A549 (cell line): ENCODE measurements at regions of chr22 and their contacts with region 1.

Region 1: GRCh38 chr22:23893943-23894709 is at the start of gene MIF:
- DNase-seq: peak; percentile 73 to 93
- ATAC-seq: peak; percentile 84 to 88
- H3K4me3 ChIP-seq: peak within 1 kb of the TSS; percentile 81
- H3K27ac ChIP-seq: peak within 1 kb of the TSS; percentile 98 to 99
- H3K4me1 ChIP-seq: peaks cover 29% of the 10 kb centered on the region
- CTCF ChIP-seq: peak; percentile 60
- EP300 ChIP-seq: no peak
- POLR2A ChIP-seq: peak; percentile 91
- RAD21 ChIP-seq: 0 out of 5 replicates have a peak, but pooled peaks of 1 of the 2 experiments have one; percentile 14
- polyA plus RNA-seq, gene MIF: 173 and 197 TPM in 2 replicates

Region 2: GRCh38 chr22:23857606-23858483 is 36.3 kb before region 1 on chr22 and contains the start of gene SLC2A11:
- CTCF ChIA-PET with region 1: interaction called, 12 read pairs
- POLR2A ChIA-PET with region 1: interaction called, 25 read pairs
- DNase-seq: peak; percentile 85 to 95
- ATAC-seq: peak; percentile 96 to 97
- H3K4me3 ChIP-seq: peak within 1 kb of the TSS; percentile 58
- H3K27ac ChIP-seq: peak within 1 kb of the TSS; percentile 81 to 90
- H3K4me1 ChIP-seq: peaks cover 9% of the 10 kb centered on the region; the same call in 1 of the 3 replicates
- CTCF ChIP-seq: no peak
- EP300 ChIP-seq: no peak
- POLR2A ChIP-seq: peak; percentile 92
- RAD21 ChIP-seq: no peak
- polyA plus RNA-seq, gene SLC2A11: 5.6 and 6.9 TPM in 2 replicates

Region 3: DNA sequence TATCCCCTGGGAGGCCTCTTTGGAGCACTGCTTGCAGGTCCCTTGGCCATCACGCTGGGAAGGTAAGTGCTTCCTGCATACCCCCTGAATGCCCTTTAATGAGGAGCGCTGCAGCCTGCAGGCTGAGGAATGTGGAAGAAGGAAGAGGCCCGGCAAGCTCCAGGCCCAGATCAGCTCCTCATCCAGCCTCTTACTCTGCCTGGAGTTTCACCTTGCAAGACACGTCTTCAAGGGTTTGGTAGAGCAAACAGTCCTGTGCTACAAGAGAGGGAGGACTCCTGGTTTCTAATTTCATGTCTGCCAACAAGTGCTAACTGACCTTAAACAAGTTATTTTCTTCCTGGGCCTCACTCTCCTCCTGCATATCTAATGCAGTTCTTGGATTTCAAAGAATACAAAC is 25.5 kb before region 1 on chr22:
- CTCF ChIA-PET with region 1: interaction called, 12 read pairs
- POLR2A ChIA-PET with region 1: interaction called, 6 read pairs
- DNase-seq: no peak
- ATAC-seq: no peak
- H3K4me3 ChIP-seq: no peak overlapping the region
- H3K27ac ChIP-seq: no peak overlapping the region
- H3K4me1 ChIP-seq: no peaks in the 10 kb centered on the region
- CTCF ChIP-seq: no peak
- EP300 ChIP-seq: no peak
- POLR2A ChIP-seq: no peak
- RAD21 ChIP-seq: no peak

Region 4: DNA sequence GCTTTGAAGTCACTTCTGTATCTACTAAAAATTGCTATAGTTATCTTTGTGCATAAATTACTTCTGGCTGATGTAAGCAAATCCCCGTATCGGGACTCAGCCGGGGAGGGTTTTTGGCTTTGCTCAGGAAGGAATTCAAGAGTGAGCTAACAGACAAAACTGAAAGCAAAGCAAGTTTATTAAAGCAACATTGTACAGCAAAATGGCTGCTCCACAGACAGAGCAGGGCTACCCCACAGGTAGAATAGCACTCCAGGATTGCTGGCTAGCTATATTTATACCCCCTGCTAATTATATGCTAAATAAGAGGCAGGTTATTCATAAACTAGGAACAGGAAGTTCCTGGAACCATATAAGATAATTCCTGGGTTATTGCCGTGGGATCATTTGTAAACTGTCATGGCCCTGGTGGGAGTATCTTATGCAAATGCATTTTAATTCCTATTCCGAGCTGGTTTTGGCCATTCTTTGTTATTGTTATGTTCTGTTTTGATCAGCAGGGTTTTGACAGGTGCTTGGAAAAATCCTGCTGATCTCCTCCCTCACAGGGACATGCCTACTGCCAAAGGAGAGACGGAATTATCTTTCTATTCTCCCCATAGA is 15.3 kb after region 1 on chr22:
- CTCF ChIA-PET with region 1: interaction called, 12 read pairs
- POLR2A ChIA-PET with region 1: interaction called, 3 read pairs
- DNase-seq: no peak
- ATAC-seq: no peak
- H3K4me3 ChIP-seq: no peak overlapping the region
- H3K27ac ChIP-seq: no peak overlapping the region
- H3K4me1 ChIP-seq: no peaks in the 10 kb centered on the region
- CTCF ChIP-seq: no peak
- EP300 ChIP-seq: no peak
- POLR2A ChIP-seq: no peak
- RAD21 ChIP-seq: no peak

Region 5: DNA sequence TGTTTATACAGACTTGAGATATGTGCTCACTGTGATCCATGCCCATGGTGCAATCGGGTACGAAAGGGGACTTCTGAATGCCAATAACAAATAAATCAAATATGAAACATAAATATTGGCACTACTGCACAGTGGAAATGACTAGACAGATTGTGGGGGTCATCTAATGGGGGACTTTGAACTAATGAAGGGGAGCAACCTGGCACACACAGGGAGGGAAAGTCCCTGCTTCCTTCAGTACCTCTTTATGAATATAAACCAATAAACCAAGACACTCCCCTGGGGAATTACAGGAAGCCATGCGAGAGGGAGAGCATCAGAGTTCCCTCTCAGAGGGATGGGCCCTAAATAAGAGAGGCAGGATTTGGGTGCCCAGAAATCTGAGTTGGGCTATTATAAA is 21.2 kb after region 1 on chr22:
- CTCF ChIA-PET with region 1: interaction called, 12 read pairs
- POLR2A ChIA-PET with region 1: interaction called, 10 read pairs
- DNase-seq: no peak
- ATAC-seq: no peak
- H3K4me3 ChIP-seq: no peak overlapping the region
- H3K27ac ChIP-seq: no peak overlapping the region
- H3K4me1 ChIP-seq: peaks cover 8% of the 10 kb centered on the region; the same call in 1 of the 3 replicates
- CTCF ChIP-seq: no peak
- EP300 ChIP-seq: no peak
- POLR2A ChIP-seq: no peak
- RAD21 ChIP-seq: no peak